Ovary (tissue), 10 donors: ENCODE measurements at regions of chr9 and their contacts with region 1.

Region 1: GRCh38 chr9:124771021-124771866 is at the start of gene NR6A1:
- DNase-seq: peak; percentile 94 to 98 (median 96)
- H3K4me3 ChIP-seq: peak within 1 kb of the TSS; percentile 89
- H3K27ac ChIP-seq: no peak within 1 kb of the TSS
- H3K4me1 ChIP-seq: no peaks in the 10 kb centered on the region
- H3K27me3 ChIP-seq: no peaks in the 10 kb centered on the region
- CTCF ChIP-seq: peak in 1 of 3 donors; percentile 27
- EP300 ChIP-seq: no peak
- POLR2A ChIP-seq: peak; percentile 17
- total RNA-seq, gene NR6A1: 0.57 to 1.7 (median 1.00) TPM

Region 2: DNA sequence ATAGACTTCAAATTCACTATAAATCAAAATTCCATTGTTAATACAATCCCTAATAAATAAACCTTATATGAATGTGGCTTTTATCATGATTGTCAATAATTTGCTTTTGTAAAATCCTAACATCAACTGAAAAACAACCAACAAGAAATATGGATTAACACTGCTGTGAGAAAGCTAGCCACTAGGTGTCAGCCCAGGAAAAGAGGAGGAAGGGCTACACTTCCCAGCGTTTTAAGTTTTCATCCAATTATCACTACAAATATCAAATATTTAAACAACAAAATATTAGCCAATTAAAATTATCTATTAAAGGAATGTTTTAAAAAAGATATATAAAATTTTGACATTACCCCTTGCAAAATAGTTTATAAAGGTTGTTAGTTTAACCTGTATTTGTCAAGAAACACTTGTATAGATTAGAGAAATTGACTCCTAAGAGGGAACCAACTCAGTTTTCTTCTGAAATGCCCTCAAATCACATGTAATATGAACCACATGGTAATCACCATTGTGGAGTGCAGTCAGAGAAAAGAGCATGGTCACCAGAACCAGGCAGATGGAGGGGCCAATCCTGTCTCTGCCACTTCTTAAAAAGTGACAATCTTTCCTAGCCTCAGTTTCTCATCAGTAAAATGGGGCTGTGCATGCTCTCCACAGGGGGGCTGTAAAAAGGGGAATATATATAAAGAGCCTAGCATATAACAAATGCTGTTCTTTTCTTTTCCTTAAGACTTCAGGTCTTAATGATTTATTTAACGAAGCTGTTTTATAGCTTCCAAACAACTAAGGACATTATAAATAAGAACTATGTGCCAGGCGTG is 1227.0 kb before region 1 on chr9:
- intact Hi-C with region 1: no loop called
- DNase-seq: peak in 1 of 5 donors; percentile 31
- H3K4me3 ChIP-seq: no peak overlapping the region
- H3K27ac ChIP-seq: no peak overlapping the region
- H3K4me1 ChIP-seq: no peaks in the 10 kb centered on the region
- H3K27me3 ChIP-seq: no peaks in the 10 kb centered on the region
- CTCF ChIP-seq: peak; percentile 13 to 81 (median 64)
- EP300 ChIP-seq: no peak
- POLR2A ChIP-seq: no peak

Region 3: DNA sequence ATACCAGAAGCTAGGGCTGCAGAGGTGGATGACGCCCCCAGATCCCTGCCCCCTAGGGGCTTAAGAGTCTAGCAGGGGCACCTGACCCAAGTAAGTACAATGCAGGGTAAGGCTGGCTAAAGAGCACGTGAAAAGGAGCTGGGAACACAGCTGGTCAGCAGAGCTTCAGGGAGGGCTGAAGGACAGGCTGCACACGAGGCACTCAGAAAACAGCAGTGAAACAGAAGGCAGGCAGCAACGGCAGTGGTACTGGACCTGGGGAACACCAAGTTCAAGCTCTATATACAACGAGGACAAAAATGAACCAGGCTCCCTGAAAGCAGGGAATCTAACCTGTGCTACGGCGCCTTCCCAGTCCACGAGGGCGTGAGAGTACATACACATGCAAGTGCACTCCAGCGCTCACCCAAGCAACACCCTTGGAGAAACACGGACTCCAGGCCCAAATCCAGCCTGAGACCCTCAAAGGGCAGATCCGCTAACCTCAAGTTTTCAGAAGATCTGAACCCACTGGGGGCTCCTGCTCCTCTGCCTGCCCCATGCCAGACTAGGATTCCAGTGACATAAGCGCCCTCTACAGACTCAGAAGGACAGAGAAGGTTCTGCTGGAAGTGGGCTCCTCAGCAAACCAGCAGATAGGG is 413.4 kb before region 1 on chr9:
- intact Hi-C with region 1: no loop called
- DNase-seq: no peak
- H3K4me3 ChIP-seq: no peak overlapping the region
- H3K27ac ChIP-seq: no peak overlapping the region
- H3K4me1 ChIP-seq: peaks cover 5% of the 10 kb centered on the region
- H3K27me3 ChIP-seq: no peaks in the 10 kb centered on the region
- CTCF ChIP-seq: no peak
- EP300 ChIP-seq: no peak
- POLR2A ChIP-seq: no peak

Region 4: GRCh38 chr9:124450241-124450924 is 320.9 kb before region 1 on chr9 and contains the start of gene ADGRD2:
- intact Hi-C with region 1: no loop called
- DNase-seq: peak in 3 of 5 donors; percentile 16 to 58 (median 37)
- H3K4me3 ChIP-seq: no peak within 1 kb of the TSS
- H3K27ac ChIP-seq: no peak within 1 kb of the TSS
- H3K4me1 ChIP-seq: peaks cover 3% of the 10 kb centered on the region
- H3K27me3 ChIP-seq: no peaks in the 10 kb centered on the region
- CTCF ChIP-seq: no peak
- EP300 ChIP-seq: no peak
- POLR2A ChIP-seq: no peak
- total RNA-seq, gene ADGRD2: not detected

Region 5: DNA sequence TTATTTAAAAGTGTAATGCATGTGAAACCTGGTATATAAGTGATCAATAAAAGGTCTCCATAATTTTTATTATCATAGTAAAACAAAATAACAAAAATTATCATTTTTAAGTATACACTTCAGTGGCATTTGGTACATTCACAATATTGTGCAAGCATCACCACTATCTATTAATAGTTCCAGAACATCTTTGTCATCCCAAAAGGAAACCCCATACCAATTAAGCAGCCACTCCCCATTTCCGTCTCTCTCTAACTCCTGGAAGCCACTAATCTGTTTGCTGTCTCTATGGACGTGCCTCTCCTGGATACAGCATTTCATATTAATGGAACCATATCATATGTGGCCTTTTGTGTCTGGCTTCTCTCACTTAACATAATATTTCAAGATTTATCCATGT is 13.3 kb after region 1 on chr9:
- intact Hi-C with region 1: no loop called
- DNase-seq: peak in 1 of 5 donors; percentile 19
- H3K4me3 ChIP-seq: no peak overlapping the region
- H3K27ac ChIP-seq: no peak overlapping the region
- H3K4me1 ChIP-seq: peaks cover 9% of the 10 kb centered on the region
- H3K27me3 ChIP-seq: no peaks in the 10 kb centered on the region
- CTCF ChIP-seq: no peak
- EP300 ChIP-seq: no peak
- POLR2A ChIP-seq: no peak

Region 6: DNA sequence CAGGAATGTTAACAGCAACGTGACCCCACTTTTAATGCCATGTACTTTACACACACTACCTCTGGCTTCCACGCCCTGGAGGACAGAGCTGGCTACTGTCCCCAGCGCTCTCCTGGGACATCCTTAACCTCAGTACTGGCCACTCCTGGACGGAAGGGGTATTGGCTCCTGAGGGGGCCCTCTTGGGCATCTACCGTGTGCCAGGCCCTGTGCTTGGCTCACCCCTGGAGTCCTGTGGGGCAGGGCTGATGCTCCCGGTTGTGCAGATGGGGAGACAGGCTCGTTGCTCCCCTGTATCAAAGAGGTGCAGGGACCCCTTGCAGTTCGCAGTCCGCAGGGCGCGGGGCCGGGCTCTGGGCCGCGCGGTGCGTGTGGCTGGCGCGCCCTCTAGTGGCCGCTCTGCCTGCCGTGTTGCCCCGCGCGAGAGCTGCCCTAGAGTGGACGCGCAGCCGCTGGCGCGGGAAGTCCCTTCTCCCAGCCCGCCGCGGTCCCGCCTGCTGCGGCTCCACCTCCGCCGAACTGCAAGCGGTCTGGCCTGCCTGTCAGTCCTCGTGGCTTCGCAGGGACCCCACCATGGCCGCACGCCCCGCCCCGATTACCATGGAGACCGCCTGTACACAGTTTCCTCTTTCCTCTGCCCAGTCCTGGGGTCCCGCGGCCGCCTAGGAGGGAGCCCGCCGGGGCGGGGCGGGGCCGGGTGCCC is 81.7 kb after region 1 on chr9 and contains the start of gene WDR38:
- intact Hi-C with region 1: loop called (anchors 1 to 2 kb)
- DNase-seq: peak; percentile 60 to 85 (median 75)
- H3K4me3 ChIP-seq: peak within 1 kb of the TSS; percentile 31
- H3K27ac ChIP-seq: peak within 1 kb of the TSS; percentile 8 to 36
- H3K4me1 ChIP-seq: peaks cover 4% of the 10 kb centered on the region
- H3K27me3 ChIP-seq: no peaks in the 10 kb centered on the region
- CTCF ChIP-seq: peak; percentile 99 to 100 (median 99)
- EP300 ChIP-seq: no peak
- POLR2A ChIP-seq: peak; percentile 25
- total RNA-seq, gene WDR38: 0.94 to 22.5 (median 1.4) TPM in 4 of 7 donors, not detected in the others

Region 7: GRCh38 chr9:125143375-125144090 is 372.3 kb after region 1 on chr9 and contains the start of gene SCAI:
- intact Hi-C with region 1: loop called in 2 of 4 experiments (anchors 5 to 10 kb)
- DNase-seq: peak; percentile 99
- H3K4me3 ChIP-seq: peak within 1 kb of the TSS; percentile 50
- H3K27ac ChIP-seq: peak within 1 kb of the TSS in 1 of 2 donors; percentile 53
- H3K4me1 ChIP-seq: no peaks in the 10 kb centered on the region
- H3K27me3 ChIP-seq: no peaks in the 10 kb centered on the region
- CTCF ChIP-seq: peak; percentile 94 to 99 (median 99)
- EP300 ChIP-seq: no peak
- POLR2A ChIP-seq: no peak
- total RNA-seq, gene SCAI: 8.1 to 13.3 (median 9.8) TPM

Region 8: DNA sequence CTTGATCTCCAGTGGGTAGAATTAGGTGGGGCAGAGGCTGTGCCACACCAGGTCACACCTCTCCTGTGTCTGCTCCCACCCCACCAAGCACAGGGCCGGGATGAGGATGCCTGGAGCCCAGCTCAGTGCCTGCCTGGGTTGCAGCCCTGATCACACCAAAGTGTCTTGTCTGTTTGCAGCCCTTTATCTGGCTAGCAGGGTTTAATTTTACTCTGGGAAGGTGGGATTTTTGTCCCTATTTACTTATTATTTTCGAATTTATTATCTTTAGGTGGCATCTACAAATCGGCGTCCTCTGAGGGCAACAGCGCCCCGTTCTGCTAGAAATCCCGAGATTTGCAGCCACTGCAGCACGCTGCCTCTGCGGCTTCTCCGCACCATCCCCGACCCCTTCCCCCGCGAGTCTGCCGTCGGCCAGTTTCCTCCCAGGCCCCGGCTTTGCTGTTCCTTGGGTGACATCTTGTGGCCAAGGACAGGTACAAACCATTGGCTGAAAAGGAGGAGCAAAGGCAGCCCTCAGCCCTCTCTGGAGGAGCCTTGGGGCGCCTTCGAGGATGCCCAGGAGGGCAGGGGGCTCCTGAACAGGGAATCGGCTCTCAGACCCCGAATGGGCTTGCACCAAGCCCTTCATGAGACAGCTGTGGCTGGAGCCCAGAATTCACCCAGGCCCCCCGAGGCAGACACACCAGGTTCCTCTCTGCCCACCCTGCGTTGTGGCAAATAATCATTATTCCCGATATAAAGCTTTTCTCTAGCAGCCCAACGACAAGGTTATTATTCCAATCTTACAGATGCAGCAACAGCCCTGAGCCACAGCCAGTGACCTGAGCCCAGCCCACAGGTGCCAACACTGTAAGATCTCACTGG is 603.4 kb after region 1 on chr9:
- intact Hi-C with region 1: loop called in 1 of 4 experiments (anchors 5 kb)
- DNase-seq: peak; percentile 51 to 73 (median 68)
- H3K4me3 ChIP-seq: no peak overlapping the region
- H3K27ac ChIP-seq: no peak overlapping the region
- H3K4me1 ChIP-seq: peaks cover 2% of the 10 kb centered on the region
- H3K27me3 ChIP-seq: no peaks in the 10 kb centered on the region
- CTCF ChIP-seq: peak in 2 of 3 donors; percentile 60 to 64
- EP300 ChIP-seq: no peak
- POLR2A ChIP-seq: no peak